ENCODE measurements at regions of chr1 and their contacts with region 1.

Region 1: GRCh38 chr1:156500797-156501499 is 373 bp upstream of the MEF2D start:
- DNase-seq: peak; percentile 91 to 96 (median 93)
- H3K4me3 ChIP-seq: peak overlapping the region; percentile 79 to 85
- H3K4me3 Mint-ChIP-seq: peak overlapping the region; percentile 90 to 98 (median 94)
- H3K27ac ChIP-seq: peak overlapping the region; percentile 94
- H3K27ac Mint-ChIP-seq: peak overlapping the region; percentile 96 to 100 (median 99)
- H3K4me1 ChIP-seq: peaks cover 78% of the 10 kb centered on the region
- H3K4me1 Mint-ChIP-seq: peaks cover 63 to 83% (median 71%) of the 10 kb centered on the region in 4 donors
- H3K27me3 ChIP-seq: no peaks in the 10 kb centered on the region
- H3K27me3 Mint-ChIP-seq: peaks cover 0 to 2% of the 10 kb centered on the region in 2 donors

Region 2: GRCh38 chr1:156096640-156097391 is 404.1 kb before region 1 on chr1:
- CTCF ChIA-PET with region 1: no interaction called
- POLR2A ChIA-PET with region 1: no interaction called
- intact Hi-C with region 1: loop called (anchors 10 kb)
- DNase-seq: peak; percentile 88 to 98 (median 91)
- H3K4me3 ChIP-seq: peak overlapping the region in 1 of 2 donors; percentile 39
- H3K4me3 Mint-ChIP-seq: peak overlapping the region; percentile 39 to 85 (median 78)
- H3K27ac ChIP-seq: peak overlapping the region; percentile 78
- H3K27ac Mint-ChIP-seq: peak overlapping the region; percentile 90 to 100 (median 99)
- H3K4me1 ChIP-seq: peaks cover 37% of the 10 kb centered on the region
- H3K4me1 Mint-ChIP-seq: peaks cover 42 to 59% (median 48%) of the 10 kb centered on the region in 4 donors
- H3K27me3 ChIP-seq: no peaks in the 10 kb centered on the region
- H3K27me3 Mint-ChIP-seq: peaks cover 3 to 4% of the 10 kb centered on the region in 2 donors

Region 3: GRCh38 chr1:156456622-156457465 is 44.1 kb before region 1 on chr1:
- CTCF ChIA-PET with region 1: interaction called, 9 read pairs
- POLR2A ChIA-PET with region 1: interaction called, 90 read pairs
- intact Hi-C with region 1: loop called (anchors 1 kb)
- DNase-seq: peak; percentile 95 to 99 (median 97)
- H3K4me3 ChIP-seq: peak overlapping the region; percentile 61 to 81
- H3K4me3 Mint-ChIP-seq: peak overlapping the region; percentile 92 to 97 (median 94)
- H3K27ac ChIP-seq: peak overlapping the region; percentile 99
- H3K27ac Mint-ChIP-seq: peak overlapping the region; percentile 98 to 100 (median 99)
- H3K4me1 ChIP-seq: peaks cover 17% of the 10 kb centered on the region
- H3K4me1 Mint-ChIP-seq: peaks cover 7 to 26% (median 12%) of the 10 kb centered on the region in 4 donors
- H3K27me3 ChIP-seq: no peaks in the 10 kb centered on the region
- H3K27me3 Mint-ChIP-seq: no peaks in the 10 kb centered on the region

Region 4: DNA sequence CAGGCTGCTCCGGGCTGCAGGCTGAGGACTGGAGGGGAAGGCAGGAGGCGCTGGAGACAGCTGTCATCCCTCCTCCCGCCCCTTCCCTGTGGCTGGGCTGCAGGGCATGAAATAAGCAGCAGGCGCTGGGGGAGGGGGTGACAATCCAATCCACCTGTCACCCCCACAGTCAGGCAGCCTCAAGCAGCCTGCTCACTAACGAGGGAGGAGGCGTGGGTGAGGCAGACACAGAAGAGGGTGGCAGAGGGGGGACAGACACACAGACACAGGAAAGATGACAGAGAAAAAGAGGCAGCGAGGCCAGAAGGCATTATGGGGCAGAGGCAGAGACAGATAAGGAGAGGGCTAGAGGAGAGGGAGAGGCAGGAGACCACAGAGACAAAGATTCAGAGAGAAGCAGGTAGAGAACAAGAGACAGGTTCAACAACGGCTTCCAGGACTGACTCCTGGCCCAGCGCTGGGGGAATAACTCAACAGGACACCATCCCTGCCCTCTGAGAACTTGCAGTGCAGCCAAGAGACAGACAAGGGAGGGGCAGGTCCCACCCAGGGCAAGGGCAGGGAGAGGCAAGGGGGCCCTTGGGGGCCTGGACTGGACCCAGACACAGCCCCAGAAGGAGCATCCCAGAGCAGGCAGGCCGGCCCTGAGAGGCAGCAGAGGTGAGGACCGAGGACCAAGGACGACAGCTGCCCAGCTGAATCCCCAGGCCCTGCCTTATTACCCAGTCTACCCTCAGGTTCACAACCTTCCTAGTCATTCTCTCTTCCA is 11.6 kb before region 1 on chr1:
- CTCF ChIA-PET with region 1: interaction called, 257 read pairs
- POLR2A ChIA-PET with region 1: interaction called, 376 read pairs
- intact Hi-C with region 1: loop called (anchors 1 kb)
- DNase-seq: peak; percentile 29 to 77 (median 34)
- H3K4me3 ChIP-seq: peak overlapping the region; percentile 0 to 5
- H3K4me3 Mint-ChIP-seq: peak overlapping the region; percentile 60 to 95 (median 78)
- H3K27ac ChIP-seq: peak overlapping the region; percentile 51
- H3K27ac Mint-ChIP-seq: peak overlapping the region; percentile 75 to 98 (median 90)
- H3K4me1 ChIP-seq: peaks cover 98% of the 10 kb centered on the region
- H3K4me1 Mint-ChIP-seq: peaks cover 72 to 96% (median 83%) of the 10 kb centered on the region in 4 donors
- H3K27me3 ChIP-seq: no peaks in the 10 kb centered on the region
- H3K27me3 Mint-ChIP-seq: no peaks in the 10 kb centered on the region

Region 5: DNA sequence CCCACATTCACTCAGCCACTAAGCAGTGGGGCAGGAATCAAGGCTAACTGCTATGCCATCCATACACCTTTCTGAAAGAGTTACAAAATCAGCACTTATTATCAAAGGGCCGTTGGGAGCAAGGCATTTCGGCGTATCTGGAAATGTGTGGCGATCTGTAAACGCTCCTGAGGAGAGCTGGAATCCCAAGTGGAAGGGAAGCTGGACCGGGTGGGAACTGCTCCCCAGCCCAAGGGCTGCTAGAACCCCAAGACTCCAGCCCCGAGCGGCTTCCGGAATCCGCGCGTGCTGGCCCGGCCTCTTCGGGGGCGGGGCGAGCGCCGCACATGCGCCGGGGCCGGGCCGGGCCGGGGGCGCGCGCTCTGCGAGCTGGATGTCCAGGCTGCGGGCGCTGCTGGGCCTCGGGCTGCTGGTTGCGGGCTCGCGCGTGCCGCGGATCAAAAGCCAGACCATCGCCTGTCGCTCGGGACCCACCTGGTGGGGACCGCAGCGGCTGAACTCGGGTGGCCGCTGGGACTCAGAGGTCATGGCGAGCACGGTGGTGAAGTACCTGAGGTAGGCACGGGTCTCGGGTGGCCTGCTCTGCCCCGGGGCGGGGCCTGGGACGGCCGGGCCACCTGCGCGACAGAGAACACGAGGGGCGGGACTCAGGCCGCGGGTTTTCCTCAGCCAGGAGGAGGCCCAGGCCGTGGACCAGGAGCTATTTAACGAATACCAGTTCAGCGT is 90.6 kb after region 1 on chr1 and contains the start of gene NAXE:
- CTCF ChIA-PET with region 1: interaction called, 11 read pairs
- POLR2A ChIA-PET with region 1: interaction called, 43 read pairs
- intact Hi-C with region 1: no loop called
- DNase-seq: peak; percentile 66 to 72 (median 67)
- H3K4me3 ChIP-seq: peak within 1 kb of the TSS; percentile 80 to 95
- H3K4me3 Mint-ChIP-seq: peak within 1 kb of the TSS; percentile 89 to 92 (median 90)
- H3K27ac ChIP-seq: peak within 1 kb of the TSS; percentile 81
- H3K27ac Mint-ChIP-seq: peak within 1 kb of the TSS; percentile 86 to 97 (median 94)
- H3K4me1 ChIP-seq: peaks cover 16% of the 10 kb centered on the region
- H3K4me1 Mint-ChIP-seq: peaks cover 13 to 25% (median 21%) of the 10 kb centered on the region in 4 donors
- H3K27me3 ChIP-seq: no peaks in the 10 kb centered on the region
- H3K27me3 Mint-ChIP-seq: no peaks in the 10 kb centered on the region
- total RNA-seq, gene NAXE: 46.7 to 49.5 TPM

Region 6: GRCh38 chr1:156751758-156752757 is 251.1 kb after region 1 on chr1:
- CTCF ChIA-PET with region 1: no interaction called
- POLR2A ChIA-PET with region 1: interaction called, 4 read pairs
- intact Hi-C with region 1: loop called (anchors 1 kb)
- DNase-seq: peak; percentile 91 to 98 (median 93)
- H3K4me3 ChIP-seq: peak overlapping the region; percentile 42 to 88
- H3K4me3 Mint-ChIP-seq: peak overlapping the region; percentile 87 to 97 (median 92)
- H3K27ac ChIP-seq: peak overlapping the region; percentile 82
- H3K27ac Mint-ChIP-seq: peak overlapping the region; percentile 84 to 95 (median 92)
- H3K4me1 ChIP-seq: peaks cover 43% of the 10 kb centered on the region
- H3K4me1 Mint-ChIP-seq: peaks cover 36 to 61% (median 46%) of the 10 kb centered on the region in 4 donors
- H3K27me3 ChIP-seq: no peaks in the 10 kb centered on the region
- H3K27me3 Mint-ChIP-seq: no peaks in the 10 kb centered on the region